ENCODE measurements at regions of chr5 and their contacts with region 1.

Region 1: DNA sequence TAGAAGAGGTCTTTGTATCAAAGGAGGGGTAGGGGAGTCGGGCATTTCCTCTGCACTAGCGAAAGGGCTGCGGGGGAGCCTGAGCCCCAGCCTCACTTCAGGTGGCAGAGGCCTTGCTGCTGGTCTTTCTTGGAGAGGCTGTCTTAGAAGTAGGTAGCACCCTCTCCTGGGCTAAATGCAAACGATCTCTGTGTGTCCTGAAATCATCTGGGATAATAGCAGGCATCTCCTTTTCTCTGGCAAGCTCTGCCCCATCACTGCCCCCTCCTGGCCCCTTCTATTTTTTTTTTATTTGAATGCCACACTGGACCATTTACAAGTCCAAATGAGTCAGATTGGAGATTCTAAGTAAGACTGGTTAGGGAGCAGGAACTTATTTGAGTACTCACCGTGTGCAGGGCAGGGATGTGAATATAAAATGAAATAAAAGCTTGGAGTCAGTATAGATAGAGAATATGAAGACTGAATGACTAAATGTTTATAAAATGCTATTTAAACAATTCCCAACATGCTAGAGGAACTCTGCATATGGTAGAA is 137.1 kb downstream of the FGF1 start:
- DNase-seq: peak; percentile 73 to 80
- H3K4me3 ChIP-seq: no peak overlapping the region
- H3K27ac ChIP-seq: peak overlapping the region; percentile 48
- H3K4me1 ChIP-seq: peaks cover 43% of the 10 kb centered on the region
- H3K27me3 ChIP-seq: no peaks in the 10 kb centered on the region
- CTCF ChIP-seq: peak; percentile 93

Region 2: GRCh38 chr5:141992349-141992963 is 556.4 kb before region 1 on chr5:
- CTCF ChIA-PET with region 1: no interaction called
- POLR2A ChIA-PET with region 1: no interaction called
- intact Hi-C with region 1: loop called (anchors 2 kb)
- DNase-seq: peak; percentile 55 to 60
- H3K4me3 ChIP-seq: no peak overlapping the region
- H3K27ac ChIP-seq: no peak overlapping the region
- H3K4me1 ChIP-seq: no peaks in the 10 kb centered on the region
- H3K27me3 ChIP-seq: no peaks in the 10 kb centered on the region
- CTCF ChIP-seq: peak; percentile 90

Region 3: GRCh38 chr5:142215915-142216681 is 332.7 kb before region 1 on chr5:
- CTCF ChIA-PET with region 1: no interaction called
- POLR2A ChIA-PET with region 1: no interaction called
- intact Hi-C with region 1: loop called (anchors 1 kb)
- DNase-seq: peak; percentile 83 to 99
- H3K4me3 ChIP-seq: peak overlapping the region; percentile 34; the same call in 1 of the 2 replicates
- H3K27ac ChIP-seq: peak overlapping the region; percentile 62
- H3K4me1 ChIP-seq: peaks cover 41% of the 10 kb centered on the region
- H3K27me3 ChIP-seq: no peaks in the 10 kb centered on the region
- CTCF ChIP-seq: no peak

Region 4: GRCh38 chr5:142356716-142357473 is 191.9 kb before region 1 on chr5:
- CTCF ChIA-PET with region 1: interaction called, 3 read pairs
- POLR2A ChIA-PET with region 1: no interaction called
- intact Hi-C with region 1: loop called (anchors 2 kb)
- DNase-seq: peak; percentile 81 to 87
- H3K4me3 ChIP-seq: peak overlapping the region; percentile 65; the same call in 1 of the 2 replicates
- H3K27ac ChIP-seq: peak overlapping the region; percentile 93
- H3K4me1 ChIP-seq: peaks cover 68% of the 10 kb centered on the region
- H3K27me3 ChIP-seq: no peaks in the 10 kb centered on the region
- CTCF ChIP-seq: no peak

Region 5: GRCh38 chr5:142512043-142513042 is 36.5 kb before region 1 on chr5:
- CTCF ChIA-PET with region 1: no interaction called
- POLR2A ChIA-PET with region 1: no interaction called
- intact Hi-C with region 1: loop called (anchors 2 kb)
- DNase-seq: peak; percentile 82 to 97
- H3K4me3 ChIP-seq: no peak overlapping the region
- H3K27ac ChIP-seq: peak overlapping the region; percentile 77
- H3K4me1 ChIP-seq: peaks cover 51% of the 10 kb centered on the region
- H3K27me3 ChIP-seq: no peaks in the 10 kb centered on the region
- CTCF ChIP-seq: no peak

Region 6: GRCh38 chr5:142748568-142749249 is 199.9 kb after region 1 on chr5:
- CTCF ChIA-PET with region 1: no interaction called
- POLR2A ChIA-PET with region 1: no interaction called
- intact Hi-C with region 1: no loop called
- DNase-seq: no peak
- H3K4me3 ChIP-seq: no peak overlapping the region
- H3K27ac ChIP-seq: no peak overlapping the region
- H3K4me1 ChIP-seq: peaks cover 36% of the 10 kb centered on the region
- H3K27me3 ChIP-seq: no peaks in the 10 kb centered on the region
- CTCF ChIP-seq: peak; percentile 59

Measured in PC-9 (cell line).